Dorsolateral prefrontal cortex (tissue), 120 donors: ENCODE measurements at regions of chr6 and their contacts with region 1.

Region 1: GRCh38 chr6:13328076-13328874 is at the start of gene TBC1D7:
- DNase-seq: peak; percentile 84 to 95 (median 90)
- H3K4me3 ChIP-seq: peak within 1 kb of the TSS; percentile 62 to 98 (median 89)
- H3K27ac ChIP-seq: peak within 1 kb of the TSS; percentile 36 to 97 (median 87)
- H3K27me3 ChIP-seq: no peaks in the 10 kb centered on the region
- CTCF ChIP-seq: peak in 39 of 56 donors; percentile 0 to 67 (median 28)
- total RNA-seq, gene TBC1D7: 18.2 to 52.1 (median 27.5) TPM

Region 2: GRCh38 chr6:12890171-12890790 is 438.0 kb before region 1 on chr6:
- intact Hi-C with region 1: loop called in 1 of 2 experiments (anchors 5 kb)
- DNase-seq: no peak
- H3K4me3 ChIP-seq: no peak overlapping the region
- H3K27ac ChIP-seq: no peak overlapping the region
- H3K27me3 ChIP-seq: peaks cover 0 to 12% (median 0%) of the 10 kb centered on the region in 45 donors
- CTCF ChIP-seq: peak in 33 of 56 donors; percentile 11 to 44 (median 19)

Region 3: DNA sequence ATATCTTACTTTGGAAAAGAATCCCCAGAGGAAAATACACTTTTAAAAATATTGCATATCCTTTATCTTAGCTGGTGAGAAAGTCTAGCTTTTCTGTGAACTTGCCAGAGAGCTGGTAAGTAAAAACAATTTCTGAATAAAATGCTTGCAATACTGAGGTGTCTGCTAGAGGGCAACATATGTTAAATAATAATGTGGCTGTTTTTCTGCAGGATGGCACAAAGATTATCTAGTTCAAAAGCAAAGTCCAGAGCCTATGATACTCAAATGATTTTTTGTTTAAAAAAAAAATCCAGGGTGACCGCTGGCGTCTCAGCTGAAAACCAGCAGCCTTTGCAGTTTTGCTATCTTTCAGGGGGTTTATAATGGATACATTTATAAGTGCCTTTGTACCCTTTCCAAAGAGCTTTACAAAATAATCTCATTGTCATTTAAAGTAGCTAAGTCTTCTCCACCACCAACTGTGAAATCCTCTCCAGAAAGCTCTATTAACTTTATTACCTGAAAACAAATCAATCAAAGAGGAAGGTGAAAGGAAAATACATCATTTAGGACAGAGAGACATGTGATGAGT is 416.8 kb before region 1 on chr6:
- intact Hi-C with region 1: loop called (anchors 2 to 5 kb)
- DNase-seq: no peak
- H3K4me3 ChIP-seq: peak overlapping the region in 1 of 59 donors; percentile 8
- H3K27ac ChIP-seq: peak overlapping the region in 8 of 59 donors; percentile 14 to 49 (median 26)
- H3K27me3 ChIP-seq: no peaks in the 10 kb centered on the region
- CTCF ChIP-seq: peak; percentile 41 to 83 (median 68)

Region 4: GRCh38 chr6:12957321-12958051 is 370.8 kb before region 1 on chr6:
- intact Hi-C with region 1: loop called in 1 of 2 experiments (anchors 5 kb)
- DNase-seq: peak; percentile 26 to 82 (median 74)
- H3K4me3 ChIP-seq: peak overlapping the region; percentile 53 to 92 (median 75)
- H3K27ac ChIP-seq: peak overlapping the region; percentile 20 to 96 (median 87)
- H3K27me3 ChIP-seq: no peaks in the 10 kb centered on the region
- CTCF ChIP-seq: peak in 15 of 56 donors; percentile 4 to 40 (median 18)

Region 5: DNA sequence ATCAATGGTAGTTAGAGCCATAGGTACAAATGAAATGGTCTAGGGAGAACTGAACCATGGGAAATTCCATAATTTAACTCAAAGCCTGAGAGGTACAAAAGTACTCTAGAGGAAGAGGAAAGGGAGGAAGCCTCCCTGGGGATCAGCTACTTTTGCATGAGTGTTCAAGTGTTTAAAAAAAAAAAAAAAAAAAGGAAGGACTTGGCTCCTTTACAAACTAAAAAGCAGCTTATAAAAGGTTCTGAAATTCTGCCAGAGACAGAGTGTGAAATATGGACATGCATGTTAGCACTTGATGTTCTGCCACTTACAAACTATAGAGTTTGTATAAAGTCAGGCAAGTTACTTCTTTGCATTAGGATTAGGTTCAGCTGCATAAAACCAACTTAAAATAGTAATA is 290.0 kb before region 1 on chr6:
- intact Hi-C with region 1: no loop called
- DNase-seq: no peak
- H3K4me3 ChIP-seq: no peak overlapping the region
- H3K27ac ChIP-seq: peak overlapping the region in 32 of 59 donors; percentile 2 to 82 (median 55)
- H3K27me3 ChIP-seq: no peaks in the 10 kb centered on the region
- CTCF ChIP-seq: no peak

Region 6: GRCh38 chr6:13194852-13195251 is 133.4 kb before region 1 on chr6:
- intact Hi-C with region 1: loop called (anchors 1 to 2 kb)
- DNase-seq: peak in 5 of 10 donors; percentile 39 to 62 (median 53)
- H3K4me3 ChIP-seq: no peak overlapping the region
- H3K27ac ChIP-seq: no peak overlapping the region
- H3K27me3 ChIP-seq: no peaks in the 10 kb centered on the region
- CTCF ChIP-seq: peak in 54 of 56 donors; percentile 27 to 77 (median 62)

Region 7: DNA sequence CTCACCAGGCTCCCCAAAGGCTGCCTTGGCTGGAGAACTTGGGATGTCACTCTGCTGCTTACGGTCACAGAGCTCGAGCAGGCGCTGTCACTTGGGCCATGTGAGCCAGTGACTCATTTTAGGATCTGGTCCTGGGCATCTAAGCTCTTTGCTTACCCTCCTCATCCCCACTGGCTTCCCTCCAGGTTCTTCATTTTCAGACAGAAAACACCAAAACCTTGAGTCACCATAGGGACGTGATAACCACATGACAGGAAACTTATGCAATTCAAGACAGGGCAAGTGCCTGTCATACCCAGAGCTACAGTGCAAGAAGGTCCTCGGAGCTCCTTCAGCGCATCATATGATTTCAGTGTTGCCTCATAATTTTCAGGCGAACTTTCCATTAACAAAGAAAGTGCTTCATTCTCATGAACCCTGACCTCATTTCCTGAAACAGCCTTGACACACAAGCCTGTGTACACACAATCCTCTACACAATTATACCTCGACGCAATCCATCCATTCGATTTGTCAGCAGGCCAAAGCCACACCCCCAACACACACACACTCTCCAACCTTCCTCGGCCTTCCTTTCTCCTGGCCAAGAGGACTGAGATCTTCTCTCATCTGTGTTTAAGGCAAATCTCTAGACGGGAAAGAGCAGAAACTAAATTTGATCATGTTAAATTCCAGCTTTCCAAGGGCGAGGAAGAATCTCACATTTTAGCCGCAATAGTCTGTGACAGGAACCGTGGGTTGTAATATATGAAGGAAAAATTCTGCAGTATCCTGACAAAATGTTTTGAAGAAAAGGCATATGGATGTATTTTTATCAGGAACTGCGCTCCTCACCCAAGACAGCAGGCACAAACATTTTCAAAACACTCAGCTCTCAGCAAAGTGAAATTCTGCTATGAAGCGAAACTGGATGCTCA is 25.3 kb before region 1 on chr6:
- intact Hi-C with region 1: loop called in 1 of 2 experiments (anchors 2 kb)
- DNase-seq: peak in 7 of 10 donors; percentile 35 to 80 (median 62)
- H3K4me3 ChIP-seq: peak overlapping the region in 52 of 59 donors; percentile 0 to 55 (median 26)
- H3K27ac ChIP-seq: peak overlapping the region; percentile 76 to 97 (median 91)
- H3K27me3 ChIP-seq: no peaks in the 10 kb centered on the region
- CTCF ChIP-seq: peak in 1 of 56 donors; percentile 4

Region 8: DNA sequence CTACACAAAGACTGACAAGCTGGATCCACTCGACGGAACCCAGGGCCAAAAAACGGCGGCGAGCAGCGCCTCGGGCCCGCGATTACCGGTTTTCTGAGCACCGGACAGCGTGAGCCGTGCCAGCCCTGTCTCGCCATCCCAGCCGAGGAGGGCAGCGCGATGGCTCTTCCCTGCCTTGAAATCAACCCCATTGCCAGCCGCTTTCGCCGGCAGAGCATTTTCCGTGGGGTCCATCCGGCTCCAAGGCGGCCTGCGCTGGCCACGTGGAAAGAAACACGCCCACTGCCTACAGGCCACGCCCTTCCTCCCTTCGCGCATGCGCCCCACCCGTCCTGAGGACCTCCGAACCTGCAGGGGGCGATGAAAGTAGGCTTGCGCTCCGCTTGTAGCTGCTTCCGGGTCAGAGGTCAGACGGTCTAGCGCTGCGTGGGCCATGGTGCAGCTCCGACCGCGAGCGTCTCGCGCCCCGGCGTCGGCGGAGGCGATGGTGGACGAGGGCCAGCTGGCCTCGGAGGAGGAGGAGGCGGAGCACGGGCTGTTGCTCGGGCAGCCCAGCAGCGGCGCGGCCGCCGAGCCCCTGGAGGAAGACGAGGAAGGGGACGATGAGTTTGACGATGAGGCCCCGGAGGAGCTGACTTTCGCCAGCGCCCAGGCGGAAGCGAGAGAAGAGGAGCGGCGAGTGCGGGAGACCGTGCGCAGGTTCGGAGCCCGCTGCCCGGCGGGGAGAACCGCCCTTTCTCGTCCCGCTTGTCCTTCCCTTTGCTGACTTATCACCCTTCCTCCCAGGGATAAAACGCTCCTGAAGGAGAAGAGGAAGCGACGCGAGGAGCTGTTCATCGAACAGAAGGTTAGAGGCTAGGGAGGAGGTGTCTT is 286.9 kb after region 1 on chr6 and contains the start of gene NOL7:
- intact Hi-C with region 1: loop called in 1 of 2 experiments (anchors 5 kb)
- DNase-seq: peak; percentile 93 to 97 (median 96)
- H3K4me3 ChIP-seq: peak within 1 kb of the TSS; percentile 69 to 99 (median 92)
- H3K27ac ChIP-seq: peak within 1 kb of the TSS; percentile 66 to 97 (median 89)
- H3K27me3 ChIP-seq: no peaks in the 10 kb centered on the region
- CTCF ChIP-seq: peak; percentile 81 to 99 (median 95)
- total RNA-seq, gene NOL7: 37.1 to 64.3 (median 48.9) TPM